Activated CD4-positive, alpha-beta memory T cell treated with anti-CD3 and anti-CD28 coated beads for 36 hours (primary cell): ENCODE measurements at regions of chr17 and their contacts with region 1.

Region 1: GRCh38 chr17:68435876-68436842 is 21.1 kb downstream of the WIPI1 start:
- DNase-seq: peak; percentile 90
- H3K4me3 Mint-ChIP-seq: peak overlapping the region; percentile 38
- H3K27ac Mint-ChIP-seq: peak overlapping the region; percentile 79
- H3K4me1 Mint-ChIP-seq: peaks cover 51% of the 10 kb centered on the region
- H3K27me3 Mint-ChIP-seq: no peaks in the 10 kb centered on the region

Region 2: DNA sequence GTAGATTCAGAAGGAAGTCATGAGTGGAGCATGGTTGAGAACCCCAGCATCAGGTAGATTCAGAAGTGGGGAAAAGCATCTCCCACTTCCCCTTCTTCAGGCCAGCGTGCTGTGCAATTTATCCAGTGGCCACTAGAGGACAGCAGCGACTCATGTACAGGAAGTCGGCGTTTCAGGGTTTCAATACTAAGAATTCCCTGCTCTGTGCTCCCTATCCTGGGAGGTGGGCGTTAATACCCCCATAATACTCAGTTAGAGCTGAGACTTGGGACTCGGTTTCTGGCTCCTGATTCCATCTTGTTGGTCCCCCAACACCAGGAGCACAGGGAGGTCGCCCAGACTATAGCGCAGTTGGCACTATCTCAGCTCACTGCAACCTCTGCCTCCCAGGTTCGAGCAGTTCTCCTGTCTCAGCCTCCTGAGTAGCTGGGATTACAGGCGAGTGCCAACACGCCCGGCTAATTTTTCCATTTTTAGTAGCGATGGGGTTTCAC is 263.7 kb before region 1 on chr17:
- CTCF ChIA-PET with region 1: interaction called, 30 read pairs
- POLR2A ChIA-PET with region 1: no interaction called
- intact Hi-C with region 1: loop called (anchors 2 kb)
- DNase-seq: peak; percentile 83
- H3K4me3 Mint-ChIP-seq: no peak overlapping the region
- H3K27ac Mint-ChIP-seq: no peak overlapping the region
- H3K4me1 Mint-ChIP-seq: peaks cover 16% of the 10 kb centered on the region
- H3K27me3 Mint-ChIP-seq: no peaks in the 10 kb centered on the region

Region 3: GRCh38 chr17:68255731-68256538 is 180.2 kb before region 1 on chr17:
- CTCF ChIA-PET with region 1: interaction called, 123 read pairs
- POLR2A ChIA-PET with region 1: no interaction called
- intact Hi-C with region 1: no loop called
- DNase-seq: peak; percentile 50
- H3K4me3 Mint-ChIP-seq: peak overlapping the region; percentile 5
- H3K27ac Mint-ChIP-seq: peak overlapping the region; percentile 84
- H3K4me1 Mint-ChIP-seq: peaks cover 84% of the 10 kb centered on the region
- H3K27me3 Mint-ChIP-seq: no peaks in the 10 kb centered on the region

Region 4: DNA sequence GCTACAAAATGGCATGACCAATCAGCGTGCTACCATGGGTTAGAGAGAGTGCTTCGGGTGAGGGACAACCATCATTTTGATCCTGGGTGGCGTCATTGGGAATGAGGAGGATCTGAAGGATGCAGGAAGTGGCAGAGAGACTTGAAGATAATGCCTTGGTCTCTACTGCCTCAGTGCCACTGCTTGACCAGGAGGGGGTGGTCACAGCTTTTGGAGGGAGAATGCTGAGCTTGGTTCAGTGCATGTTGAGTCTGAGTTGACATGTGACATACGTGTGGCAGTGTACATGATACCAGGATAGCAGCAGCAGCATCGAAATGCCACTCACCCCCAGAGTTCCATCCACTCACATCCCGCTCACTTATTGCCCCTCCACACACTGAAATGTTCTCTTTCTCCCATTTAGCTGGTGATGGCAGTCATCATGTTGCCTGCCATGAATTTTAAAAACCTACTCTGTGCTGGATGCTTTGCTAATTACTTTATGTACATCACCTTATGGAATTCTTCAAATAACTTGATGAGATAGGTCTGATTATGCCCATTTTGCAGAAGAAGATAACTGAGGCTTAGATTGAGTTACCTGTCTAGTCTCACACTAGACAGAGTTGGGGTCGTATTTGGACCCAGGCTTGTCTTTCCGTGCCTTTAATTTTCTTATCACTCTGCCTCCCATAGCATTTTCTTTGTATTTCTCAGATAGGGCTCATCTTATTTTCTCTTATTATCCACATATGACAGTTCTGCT is 108.2 kb before region 1 on chr17:
- CTCF ChIA-PET with region 1: interaction called, 12 read pairs
- POLR2A ChIA-PET with region 1: no interaction called
- intact Hi-C with region 1: no loop called
- DNase-seq: no peak
- H3K4me3 Mint-ChIP-seq: no peak overlapping the region
- H3K27ac Mint-ChIP-seq: no peak overlapping the region
- H3K4me1 Mint-ChIP-seq: peaks cover 18% of the 10 kb centered on the region
- H3K27me3 Mint-ChIP-seq: no peaks in the 10 kb centered on the region

Region 5: DNA sequence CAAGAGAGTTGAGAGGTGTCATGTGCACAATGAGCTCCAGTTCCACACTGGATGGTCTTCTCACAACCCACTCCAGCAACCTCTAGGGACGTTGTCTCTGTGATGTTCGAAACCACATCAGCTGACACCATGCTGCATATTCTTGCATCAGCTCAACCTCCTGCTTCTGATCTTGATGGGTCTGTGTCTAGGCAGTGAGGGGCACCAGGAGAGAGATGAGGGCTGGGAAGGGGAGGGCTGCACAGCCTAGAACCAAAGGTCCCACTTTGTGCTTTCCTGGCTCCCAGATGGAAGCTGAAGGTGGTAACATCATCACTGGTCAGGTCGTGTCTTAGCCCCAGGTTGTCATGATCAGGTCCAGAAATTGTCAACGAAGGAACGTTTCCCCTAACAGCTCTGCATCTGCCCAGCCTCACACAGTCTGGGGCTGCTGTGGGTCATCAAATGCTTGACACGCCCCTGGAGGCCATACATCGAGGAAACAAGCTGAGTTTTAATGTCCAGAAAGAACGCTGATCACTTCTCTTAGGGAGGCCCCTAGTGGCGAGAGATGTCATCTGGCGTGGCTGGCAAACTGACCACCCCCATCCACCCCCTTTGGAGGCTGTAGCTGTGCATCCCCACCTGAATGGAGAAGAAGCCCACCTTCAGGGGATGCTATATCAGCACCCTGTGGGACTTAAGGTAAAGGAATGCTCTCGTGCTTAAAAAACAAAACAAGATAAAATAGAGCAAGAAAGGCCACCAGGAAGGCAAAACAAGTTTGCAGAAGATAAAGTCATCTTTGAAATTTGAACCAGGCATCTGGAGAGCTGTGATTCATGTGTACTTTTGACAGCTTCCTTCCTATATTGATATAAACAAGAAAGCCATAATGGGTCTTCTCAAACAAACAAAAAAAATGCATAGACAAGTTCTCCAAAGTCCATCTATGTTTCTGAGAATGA is 37.2 kb before region 1 on chr17:
- CTCF ChIA-PET with region 1: interaction called, 30 read pairs
- POLR2A ChIA-PET with region 1: interaction called, 3 read pairs
- intact Hi-C with region 1: loop called (anchors 2 kb)
- DNase-seq: peak; percentile 55
- H3K4me3 Mint-ChIP-seq: peak overlapping the region; percentile 45
- H3K27ac Mint-ChIP-seq: peak overlapping the region; percentile 87
- H3K4me1 Mint-ChIP-seq: peaks cover 37% of the 10 kb centered on the region
- H3K27me3 Mint-ChIP-seq: no peaks in the 10 kb centered on the region